ENCODE measurements at regions of chrX and their contacts with region 1.

Region 1: DNA sequence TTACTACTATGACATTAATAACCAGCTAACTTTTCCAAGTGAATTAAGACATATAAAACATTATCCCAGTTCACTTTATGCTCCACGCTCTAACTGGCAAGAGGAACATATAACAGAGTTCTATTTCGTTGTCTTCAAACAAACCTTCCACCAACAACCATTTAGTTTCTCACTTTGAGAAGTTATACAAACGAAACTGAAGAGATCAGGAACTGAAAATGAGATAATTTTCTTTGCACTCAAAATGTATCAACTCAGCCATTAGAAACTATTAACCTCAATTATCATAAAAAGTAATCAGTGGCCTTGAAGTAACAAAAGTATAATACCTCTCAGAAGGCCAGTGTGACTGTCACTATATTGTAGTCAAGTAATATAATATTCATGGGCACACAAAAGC is 70.1 kb downstream of the CHM start:
- DNase-seq: no peak
- ATAC-seq: no peak
- H3K4me3 ChIP-seq: no peak overlapping the region
- H3K4me3 Mint-ChIP-seq: no peak overlapping the region
- H3K27ac ChIP-seq: no peak overlapping the region
- H3K27ac Mint-ChIP-seq: no peak overlapping the region
- H3K4me1 ChIP-seq: no peaks in the 10 kb centered on the region
- H3K4me1 Mint-ChIP-seq: no peaks in the 10 kb centered on the region
- H3K27me3 ChIP-seq: no peaks in the 10 kb centered on the region
- H3K27me3 Mint-ChIP-seq: no peaks in the 10 kb centered on the region

Region 2: DNA sequence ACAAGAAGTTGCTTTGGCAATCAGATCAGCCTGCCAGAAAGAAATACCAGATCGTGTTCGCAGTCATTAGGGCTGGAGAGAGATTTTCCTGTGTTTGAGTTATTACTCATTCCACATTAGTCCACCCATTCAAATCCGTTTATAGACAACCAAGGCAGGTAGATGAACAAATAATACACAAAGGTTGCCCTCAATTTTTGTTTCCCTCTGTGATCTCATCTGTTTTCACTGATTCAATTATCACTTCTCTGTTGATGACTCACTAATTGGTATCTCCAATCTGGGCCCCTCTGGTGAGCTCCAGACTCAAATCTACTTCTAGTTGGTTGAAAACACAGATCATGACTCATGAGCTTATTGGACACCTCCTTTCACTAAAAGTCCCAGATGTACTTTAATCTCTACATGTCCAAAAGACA is 15.6 kb after region 1 on chrX:
- CTCF ChIA-PET with region 1: interaction called in 1 of 2 experiments, 12 read pairs
- POLR2A ChIA-PET with region 1: no interaction called
- DNase-seq: no peak
- ATAC-seq: no peak
- H3K4me3 ChIP-seq: no peak overlapping the region
- H3K4me3 Mint-ChIP-seq: no peak overlapping the region
- H3K27ac ChIP-seq: no peak overlapping the region
- H3K27ac Mint-ChIP-seq: no peak overlapping the region
- H3K4me1 ChIP-seq: no peaks in the 10 kb centered on the region
- H3K4me1 Mint-ChIP-seq: peaks cover 22 to 49% (median 35%) of the 10 kb centered on the region in 3 donors
- H3K27me3 ChIP-seq: no peaks in the 10 kb centered on the region
- H3K27me3 Mint-ChIP-seq: no peaks in the 10 kb centered on the region

Region 3: DNA sequence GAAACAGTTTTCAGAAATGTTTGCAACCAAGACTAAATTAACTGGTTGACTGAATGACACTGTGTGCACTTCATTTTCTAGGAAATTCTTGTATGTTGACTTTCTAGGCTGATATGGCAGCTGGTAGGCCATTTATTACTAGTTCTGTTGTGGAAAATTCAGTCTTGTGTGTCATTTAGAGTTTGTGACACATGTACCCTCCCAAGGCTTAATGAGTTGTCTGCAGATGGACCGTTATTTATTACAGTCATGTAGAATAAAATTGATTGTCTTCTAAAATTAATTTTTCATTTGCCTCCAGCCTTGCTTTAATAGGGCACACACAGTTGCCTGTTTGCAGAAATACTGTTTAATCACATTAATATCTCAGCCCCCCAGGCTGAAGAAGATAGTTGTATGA is 201.7 kb after region 1 on chrX:
- CTCF ChIA-PET with region 1: no interaction called
- POLR2A ChIA-PET with region 1: no interaction called
- DNase-seq: no peak
- ATAC-seq: no peak
- H3K4me3 ChIP-seq: no peak overlapping the region
- H3K4me3 Mint-ChIP-seq: no peak overlapping the region
- H3K27ac ChIP-seq: no peak overlapping the region
- H3K27ac Mint-ChIP-seq: no peak overlapping the region
- H3K4me1 ChIP-seq: no peaks in the 10 kb centered on the region
- H3K4me1 Mint-ChIP-seq: no peaks in the 10 kb centered on the region
- H3K27me3 ChIP-seq: no peaks in the 10 kb centered on the region
- H3K27me3 Mint-ChIP-seq: peaks cover 0 to 21% of the 10 kb centered on the region in 2 donors